Activated B cell treated with CpG ODN at 0.5 μM for 24 hours (primary cell): ENCODE measurements at regions of chr16 and their contacts with region 1.

Region 1: DNA sequence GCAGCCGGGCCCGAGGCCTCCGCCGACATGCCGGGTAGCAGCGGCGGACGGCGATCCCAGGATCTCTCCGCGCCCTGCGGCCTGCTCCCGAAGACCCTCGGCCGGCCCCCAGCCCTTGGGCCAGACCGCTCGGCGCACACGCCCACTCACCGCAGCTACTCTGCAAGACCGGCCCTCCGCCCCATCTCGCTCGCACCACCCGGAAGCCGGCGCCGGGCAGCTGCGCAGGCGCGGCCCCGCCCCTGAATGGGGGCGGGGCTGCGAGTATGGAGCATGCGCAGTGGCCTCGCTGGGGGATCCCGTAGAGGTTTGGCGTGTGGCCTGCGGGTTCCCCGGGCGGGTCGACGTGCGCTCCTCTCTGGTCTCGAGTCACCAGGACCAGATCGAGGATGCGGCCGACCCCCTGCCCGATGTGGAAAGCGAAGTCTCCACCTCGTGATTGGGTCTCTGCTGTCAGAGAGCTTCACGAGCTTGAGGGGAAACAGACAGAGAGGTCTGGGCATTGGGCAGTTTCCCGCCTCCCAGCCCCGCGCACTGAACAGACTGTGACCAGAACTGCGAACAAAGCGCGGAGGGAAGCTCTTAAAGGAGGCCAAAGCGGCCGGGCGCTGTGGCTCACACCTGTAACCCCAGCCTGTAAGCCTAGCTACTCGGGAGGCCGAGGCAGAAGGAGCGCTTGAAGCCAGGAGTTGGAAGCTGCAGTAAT is at the start of gene KCTD13:
- DNase-seq: peak; percentile 100
- ATAC-seq: peak; percentile 90
- H3K4me3 Mint-ChIP-seq: peak within 1 kb of the TSS; percentile 94
- H3K27ac Mint-ChIP-seq: peak within 1 kb of the TSS; percentile 94
- H3K4me1 Mint-ChIP-seq: peaks cover 28% of the 10 kb centered on the region
- H3K27me3 Mint-ChIP-seq: no peaks in the 10 kb centered on the region
- CTCF ChIP-seq: no peak
- total RNA-seq, gene KCTD13: 37.5 and 44.4 TPM in 2 replicates

Region 2: DNA sequence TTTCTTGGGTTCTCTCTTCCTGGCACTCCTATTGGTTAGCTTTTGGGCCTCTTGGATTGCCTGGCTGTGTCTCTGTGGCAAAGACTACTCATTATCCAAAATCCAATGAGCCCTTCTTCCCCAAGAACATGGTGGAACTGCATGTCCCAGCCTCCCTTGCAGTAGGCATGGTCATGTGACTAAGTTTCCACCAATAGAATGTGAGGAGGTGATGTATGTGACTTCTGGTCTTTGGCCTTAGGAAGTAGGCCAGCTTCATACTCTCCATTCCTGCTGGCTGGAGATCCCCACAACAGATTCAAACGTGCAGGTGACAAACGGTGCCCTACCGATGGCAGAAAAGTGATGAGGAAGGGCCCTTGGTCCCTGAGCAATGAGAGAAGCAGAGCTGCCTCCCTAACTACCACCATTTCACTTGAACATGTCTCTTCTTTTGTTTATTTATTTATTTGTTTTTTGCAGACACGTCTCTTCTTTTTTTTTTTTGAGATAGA is 280.4 kb before region 1 on chr16:
- CTCF ChIA-PET with region 1: no interaction called
- POLR2A ChIA-PET with region 1: no interaction called
- intact Hi-C with region 1: no loop called
- DNase-seq: no peak
- ATAC-seq: peak; percentile 42
- H3K4me3 Mint-ChIP-seq: peak overlapping the region; percentile 69
- H3K27ac Mint-ChIP-seq: peak overlapping the region; percentile 92
- H3K4me1 Mint-ChIP-seq: peaks cover 42% of the 10 kb centered on the region
- H3K27me3 Mint-ChIP-seq: no peaks in the 10 kb centered on the region
- CTCF ChIP-seq: no peak

Region 3: DNA sequence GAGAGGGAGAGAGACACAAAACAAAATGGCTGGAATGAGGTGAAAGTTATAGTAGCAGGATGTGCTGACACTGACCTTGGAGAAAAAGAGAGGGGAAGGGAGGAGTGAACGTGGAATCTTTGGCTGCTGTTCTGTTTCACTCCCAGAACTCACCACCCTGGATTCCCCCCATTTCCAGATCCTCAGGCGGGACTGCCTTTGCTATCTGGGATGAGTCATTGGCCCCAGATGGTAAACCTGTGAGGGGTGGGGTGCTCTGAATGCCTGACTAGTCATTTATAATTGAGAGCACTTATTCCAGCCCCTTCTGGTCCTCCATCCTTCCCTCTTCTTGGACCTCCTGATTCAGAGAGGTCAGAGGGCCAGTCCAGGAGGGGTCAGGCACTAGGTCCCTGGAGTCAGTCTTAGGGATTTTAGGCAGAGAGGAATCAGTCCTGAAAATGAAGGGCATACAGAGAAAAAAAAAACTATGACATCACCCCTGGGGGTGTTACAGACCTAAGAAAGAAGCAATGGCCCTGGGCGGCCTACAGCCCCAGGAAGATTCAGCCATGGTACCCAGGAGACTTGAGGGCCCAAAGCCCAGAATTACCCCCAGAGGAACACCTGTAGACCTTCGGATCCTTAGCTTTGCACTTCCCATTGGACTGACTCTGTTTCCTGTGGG is 150.3 kb before region 1 on chr16:
- CTCF ChIA-PET with region 1: no interaction called
- POLR2A ChIA-PET with region 1: no interaction called
- intact Hi-C with region 1: no loop called
- DNase-seq: no peak
- ATAC-seq: no peak
- H3K4me3 Mint-ChIP-seq: no peak overlapping the region
- H3K27ac Mint-ChIP-seq: no peak overlapping the region
- H3K4me1 Mint-ChIP-seq: no peaks in the 10 kb centered on the region
- H3K27me3 Mint-ChIP-seq: no peaks in the 10 kb centered on the region
- CTCF ChIP-seq: no peak

Region 4: GRCh38 chr16:29842732-29843346 is 83.3 kb before region 1 on chr16:
- CTCF ChIA-PET with region 1: no interaction called
- POLR2A ChIA-PET with region 1: no interaction called
- intact Hi-C with region 1: no loop called
- DNase-seq: no peak
- ATAC-seq: no peak
- H3K4me3 Mint-ChIP-seq: no peak overlapping the region
- H3K27ac Mint-ChIP-seq: no peak overlapping the region
- H3K4me1 Mint-ChIP-seq: no peaks in the 10 kb centered on the region
- H3K27me3 Mint-ChIP-seq: no peaks in the 10 kb centered on the region
- CTCF ChIP-seq: no peak

Region 5: DNA sequence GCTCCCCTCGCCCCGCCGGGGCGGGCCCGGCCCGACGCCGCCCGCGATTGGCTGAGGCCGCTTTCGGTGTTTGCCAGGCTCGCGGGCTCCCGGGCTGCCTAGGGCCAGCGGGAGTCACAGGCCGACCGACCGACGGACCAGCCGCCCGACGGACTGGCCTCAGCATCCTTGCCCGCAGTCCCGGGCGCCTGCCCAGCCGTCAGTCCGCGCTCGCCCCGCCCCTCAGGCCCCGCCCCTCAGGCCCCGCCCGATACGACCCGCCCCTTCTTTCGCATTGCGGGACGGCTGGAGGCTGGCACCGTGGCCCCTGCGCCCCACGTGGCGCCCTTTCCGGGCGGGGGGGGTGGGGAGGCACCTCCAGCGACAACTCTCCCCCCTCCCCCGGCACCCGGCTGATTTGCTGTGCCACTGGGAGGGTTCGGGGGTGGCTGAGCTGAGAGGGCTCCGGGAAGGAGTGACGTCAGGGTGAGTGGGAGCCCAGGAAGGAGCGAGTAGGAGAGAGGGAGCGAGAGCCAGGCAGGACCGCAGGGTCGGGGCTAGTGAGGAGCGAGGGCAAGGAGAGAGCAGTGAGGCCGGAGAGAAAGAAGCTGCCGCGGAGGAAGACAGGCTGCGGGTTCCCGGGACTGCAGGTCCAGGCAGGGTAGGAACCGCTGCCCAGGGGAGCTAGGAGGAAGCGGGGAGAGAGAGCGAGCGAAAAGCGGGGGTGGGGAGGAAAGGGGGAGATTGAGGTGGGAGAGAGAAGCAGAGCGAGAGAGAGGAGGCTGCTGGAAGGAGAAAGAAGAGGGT is 25.9 kb before region 1 on chr16 and contains the start of gene ASPHD1:
- CTCF ChIA-PET with region 1: no interaction called
- POLR2A ChIA-PET with region 1: interaction called, 4 read pairs
- intact Hi-C with region 1: loop called (anchors 1 kb)
- DNase-seq: no peak
- ATAC-seq: peak; percentile 90
- H3K4me3 Mint-ChIP-seq: peak within 1 kb of the TSS; percentile 77
- H3K27ac Mint-ChIP-seq: no peak within 1 kb of the TSS
- H3K4me1 Mint-ChIP-seq: peaks cover 5% of the 10 kb centered on the region
- H3K27me3 Mint-ChIP-seq: peaks cover 33% of the 10 kb centered on the region
- CTCF ChIP-seq: no peak
- total RNA-seq, gene ASPHD1: 0.12 TPM in 1 of 2 replicates, not detected in the other

Region 6: GRCh38 chr16:29915590-29916247 is 10.4 kb before region 1 on chr16:
- CTCF ChIA-PET with region 1: no interaction called
- POLR2A ChIA-PET with region 1: interaction called, 10 read pairs
- intact Hi-C with region 1: no loop called
- DNase-seq: no peak
- ATAC-seq: no peak
- H3K4me3 Mint-ChIP-seq: no peak overlapping the region
- H3K27ac Mint-ChIP-seq: no peak overlapping the region
- H3K4me1 Mint-ChIP-seq: peaks cover 3% of the 10 kb centered on the region
- H3K27me3 Mint-ChIP-seq: no peaks in the 10 kb centered on the region
- CTCF ChIP-seq: no peak

Region 7: DNA sequence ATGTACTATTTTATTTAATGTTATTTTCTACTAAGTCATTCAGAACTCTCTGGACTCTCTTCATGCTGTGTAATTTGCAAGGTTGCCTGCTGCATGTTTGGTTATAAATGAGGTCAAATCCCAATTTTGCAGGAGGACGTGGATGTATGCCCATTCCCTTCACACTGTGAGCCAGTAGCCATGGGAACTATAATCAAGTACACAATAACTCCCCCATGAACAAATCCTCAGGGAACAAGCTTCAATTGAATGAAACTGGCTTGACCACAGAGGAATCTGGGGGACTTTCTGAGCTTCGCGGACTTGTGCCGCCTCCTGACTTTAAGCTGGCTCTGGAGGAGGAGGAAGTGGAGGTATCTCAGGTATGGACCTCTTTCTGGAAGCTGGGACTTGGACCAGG is 14.5 kb after region 1 on chr16:
- CTCF ChIA-PET with region 1: no interaction called
- POLR2A ChIA-PET with region 1: no interaction called
- intact Hi-C with region 1: no loop called
- DNase-seq: no peak
- ATAC-seq: no peak
- H3K4me3 Mint-ChIP-seq: no peak overlapping the region
- H3K27ac Mint-ChIP-seq: no peak overlapping the region
- H3K4me1 Mint-ChIP-seq: no peaks in the 10 kb centered on the region
- H3K27me3 Mint-ChIP-seq: peaks cover 12% of the 10 kb centered on the region
- CTCF ChIP-seq: no peak

Region 8: DNA sequence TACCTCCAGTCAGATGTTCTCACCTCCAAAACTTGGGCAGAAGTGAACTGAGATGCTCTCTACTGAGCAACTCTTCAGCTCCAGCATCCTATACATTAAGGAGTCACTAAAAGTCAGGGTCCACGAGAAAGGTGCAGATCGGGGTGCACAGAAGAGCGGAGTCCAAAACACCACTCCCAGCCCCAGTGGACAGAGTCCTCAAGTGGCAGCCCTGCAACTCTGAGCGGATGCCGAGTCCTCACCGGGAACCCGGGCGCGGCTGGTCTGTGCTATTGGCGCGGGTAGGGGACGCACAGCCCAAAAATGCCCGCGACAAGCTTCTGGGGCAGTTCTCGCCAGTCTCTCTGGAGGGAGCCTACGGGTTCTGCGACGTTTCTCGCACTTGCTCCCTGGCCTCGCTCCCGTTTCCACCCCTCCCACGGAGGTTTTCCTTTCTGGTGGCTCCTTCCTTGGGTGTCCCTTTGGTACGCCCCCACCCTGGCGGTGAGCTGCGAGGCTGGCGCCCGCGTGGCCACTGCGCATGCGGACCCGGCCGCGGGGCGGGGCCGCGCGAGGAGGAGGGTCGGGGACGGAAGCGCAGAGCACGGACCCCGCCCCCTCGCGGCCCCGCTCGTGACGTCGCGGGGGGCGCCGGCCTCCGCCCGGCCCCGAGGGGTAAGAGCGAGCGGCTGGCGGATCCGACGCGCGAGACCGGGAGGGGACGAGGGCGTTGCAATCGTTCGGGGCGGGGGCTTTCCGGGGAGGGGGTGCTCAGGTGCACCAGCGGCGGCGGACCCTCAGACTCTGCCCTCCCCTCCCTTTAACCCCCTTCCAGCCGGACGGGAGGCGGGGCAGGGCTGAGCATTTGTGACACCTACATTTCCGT is 35.6 kb after region 1 on chr16 and contains the start of gene TMEM219:
- CTCF ChIA-PET with region 1: interaction called, 3 read pairs
- POLR2A ChIA-PET with region 1: interaction called, 24 read pairs
- intact Hi-C with region 1: loop called (anchors 1 kb)
- DNase-seq: peak; percentile 98
- ATAC-seq: peak; percentile 90
- H3K4me3 Mint-ChIP-seq: peak within 1 kb of the TSS; percentile 88
- H3K27ac Mint-ChIP-seq: peak within 1 kb of the TSS; percentile 90
- H3K4me1 Mint-ChIP-seq: peaks cover 17% of the 10 kb centered on the region
- H3K27me3 Mint-ChIP-seq: no peaks in the 10 kb centered on the region
- CTCF ChIP-seq: no peak
- total RNA-seq, gene TMEM219: 50.3 and 50.8 TPM in 2 replicates

Region 9: DNA sequence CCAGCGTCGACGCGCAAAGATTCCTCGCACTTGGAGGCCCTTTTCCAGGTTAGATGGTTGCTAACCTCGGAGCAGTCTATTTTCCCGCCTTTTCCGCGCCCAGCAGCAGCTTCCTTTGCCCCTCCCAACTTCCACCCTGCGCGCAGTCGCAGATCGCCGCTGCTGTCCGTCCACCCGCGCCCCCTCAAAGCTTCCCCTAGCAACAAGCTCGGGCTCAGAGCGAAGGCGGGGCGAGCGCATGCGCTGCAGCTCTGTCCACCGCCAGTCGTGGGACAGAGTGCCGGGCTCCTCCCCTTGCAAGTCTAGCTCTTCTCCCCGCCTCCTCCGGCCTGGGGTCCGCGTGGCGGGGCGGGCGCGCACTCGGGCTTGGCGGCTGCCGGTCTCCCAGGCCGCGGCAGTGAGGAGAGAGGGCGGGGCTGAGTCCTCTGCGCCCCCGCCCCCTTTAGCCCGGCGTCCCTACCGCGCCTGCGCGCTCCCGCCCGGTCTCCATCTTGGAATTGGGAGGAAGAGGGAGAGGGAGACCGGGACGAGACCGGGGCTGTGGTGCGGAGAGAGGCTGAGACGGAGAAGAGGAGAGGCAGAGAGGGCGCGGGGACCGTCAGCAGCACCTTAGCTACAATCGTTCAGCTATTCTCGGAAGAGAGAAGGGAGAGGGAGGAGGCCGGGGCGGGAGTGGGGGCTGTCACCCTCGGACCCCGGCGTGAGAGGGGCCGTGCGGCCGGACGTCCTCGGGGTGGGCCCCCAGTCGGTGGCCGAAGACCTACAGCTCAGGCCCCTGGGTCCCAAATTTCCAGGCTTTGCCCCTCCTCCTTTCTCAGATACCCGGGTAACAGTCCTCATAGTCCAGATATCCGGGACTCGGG is 47.5 kb after region 1 on chr16 and contains the start of gene TAOK2:
- CTCF ChIA-PET with region 1: interaction called, 4 read pairs
- POLR2A ChIA-PET with region 1: interaction called, 30 read pairs
- intact Hi-C with region 1: loop called (anchors 1 kb)
- DNase-seq: peak; percentile 95
- ATAC-seq: peak; percentile 99
- H3K4me3 Mint-ChIP-seq: peak within 1 kb of the TSS; percentile 96
- H3K27ac Mint-ChIP-seq: peak within 1 kb of the TSS; percentile 90
- H3K4me1 Mint-ChIP-seq: peaks cover 39% of the 10 kb centered on the region
- H3K27me3 Mint-ChIP-seq: no peaks in the 10 kb centered on the region
- CTCF ChIP-seq: no peak
- total RNA-seq, gene TAOK2: 30.5 and 36.1 TPM in 2 replicates

Region 10: DNA sequence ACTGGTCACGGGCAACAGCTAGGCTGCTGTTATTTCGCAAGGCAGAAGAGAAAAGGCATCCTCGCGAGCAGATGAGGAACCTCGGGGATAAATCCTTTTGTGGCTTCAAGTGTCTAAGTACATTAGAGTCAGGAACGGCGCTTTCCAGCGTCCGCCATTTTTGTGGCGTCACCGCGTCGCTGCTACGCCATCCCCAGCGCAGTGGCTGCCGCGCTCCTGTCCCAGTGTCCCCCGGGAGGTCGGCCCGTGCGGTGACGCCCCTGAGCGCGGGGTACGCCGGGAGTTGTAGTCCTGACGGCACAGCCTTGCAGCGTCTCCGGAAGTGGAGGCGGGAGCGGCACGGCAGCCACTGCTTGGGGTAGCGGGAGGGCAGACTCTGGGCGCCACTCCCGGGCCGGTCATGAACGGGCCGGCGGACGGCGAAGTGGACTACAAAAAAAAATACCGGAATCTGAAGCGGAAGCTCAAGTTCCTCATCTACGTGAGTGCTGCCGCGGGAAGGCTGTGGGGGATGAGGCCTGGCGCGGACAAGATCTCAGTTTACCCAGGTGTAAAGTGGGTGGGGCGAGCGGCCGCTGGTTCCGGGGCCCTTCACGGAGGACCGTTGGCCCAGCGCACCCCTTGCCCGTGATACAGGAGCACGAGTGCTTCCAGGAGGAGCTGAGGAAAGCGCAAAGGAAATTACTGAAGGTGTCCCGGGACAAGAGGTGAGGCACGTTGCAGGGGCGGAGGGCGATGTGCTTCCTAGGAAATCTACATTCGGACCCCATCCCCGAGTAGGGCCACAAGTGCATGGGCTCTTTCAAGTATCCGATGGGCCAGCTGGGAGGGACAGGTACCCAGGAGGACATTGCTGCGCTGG is 70.0 kb after region 1 on chr16 and contains the start of gene INO80E:
- CTCF ChIA-PET with region 1: no interaction called
- POLR2A ChIA-PET with region 1: interaction called, 11 read pairs
- intact Hi-C with region 1: loop called (anchors 1 kb)
- DNase-seq: peak; percentile 100
- ATAC-seq: peak; percentile 96
- H3K4me3 Mint-ChIP-seq: peak within 1 kb of the TSS; percentile 98
- H3K27ac Mint-ChIP-seq: peak within 1 kb of the TSS; percentile 97
- H3K4me1 Mint-ChIP-seq: peaks cover 29% of the 10 kb centered on the region
- H3K27me3 Mint-ChIP-seq: no peaks in the 10 kb centered on the region
- CTCF ChIP-seq: no peak
- total RNA-seq, gene INO80E: 83.5 and 93.6 TPM in 2 replicates